ENCODE measurements at regions of chr12 and their contacts with region 1.

Region 1: DNA sequence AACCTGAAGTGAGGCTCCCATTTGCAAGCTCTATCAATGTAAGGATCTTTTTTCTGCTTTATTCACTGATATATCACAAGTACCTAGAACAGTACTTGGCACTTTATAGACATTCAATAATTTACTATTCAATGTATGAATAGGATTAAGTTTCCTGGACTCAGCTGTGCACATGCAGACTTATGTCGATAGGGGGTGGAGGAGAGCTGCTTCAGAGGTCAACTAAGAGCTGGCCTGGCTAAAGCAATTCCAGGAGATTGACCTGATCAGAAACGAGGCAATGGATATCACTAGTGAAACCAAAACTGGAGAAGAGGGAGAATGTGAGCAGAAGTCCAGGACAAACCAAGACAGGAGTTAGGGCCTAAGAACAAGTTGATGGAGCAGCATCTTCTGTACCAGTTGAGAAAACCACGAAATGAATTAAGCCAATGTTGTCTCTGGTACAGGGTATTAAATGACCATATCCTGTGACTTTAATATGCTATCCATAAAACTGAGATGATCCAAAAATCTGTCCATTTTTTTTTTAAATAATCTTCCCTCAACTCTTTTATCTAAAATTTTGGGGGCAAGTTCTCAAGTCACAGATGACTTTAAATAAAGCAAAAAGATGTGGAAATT is 169.2 kb downstream of the PIK3C2G start:
- DNase-seq: peak; percentile 71
- ATAC-seq: peak; percentile 99
- H3K4me3 ChIP-seq: no peak overlapping the region
- H3K27ac ChIP-seq: no peak overlapping the region
- H3K4me1 ChIP-seq: no peaks in the 10 kb centered on the region
- H3K27me3 ChIP-seq: no peaks in the 10 kb centered on the region
- CTCF ChIP-seq: peak; percentile 86
- POLR2A ChIP-seq: no peak
- RAD21 ChIP-seq: peak; percentile 89

Region 2: GRCh38 chr12:18250313-18250916 is 180.1 kb before region 1 on chr12:
- CTCF ChIA-PET with region 1: interaction called, 3 read pairs
- POLR2A ChIA-PET with region 1: no interaction called
- dilution Hi-C with region 1: no loop called
- in situ Hi-C with region 1: no loop called
- intact Hi-C with region 1: loop called (anchors 5 kb)
- DNase-seq: peak; percentile 76
- ATAC-seq: peak; percentile 48; the same call in 1 of the 2 replicates
- H3K4me3 ChIP-seq: no peak overlapping the region
- H3K27ac ChIP-seq: no peak overlapping the region
- H3K4me1 ChIP-seq: no peaks in the 10 kb centered on the region
- H3K27me3 ChIP-seq: no peaks in the 10 kb centered on the region
- CTCF ChIP-seq: peak; percentile 78
- POLR2A ChIP-seq: no peak
- RAD21 ChIP-seq: peak; percentile 78

Region 3: DNA sequence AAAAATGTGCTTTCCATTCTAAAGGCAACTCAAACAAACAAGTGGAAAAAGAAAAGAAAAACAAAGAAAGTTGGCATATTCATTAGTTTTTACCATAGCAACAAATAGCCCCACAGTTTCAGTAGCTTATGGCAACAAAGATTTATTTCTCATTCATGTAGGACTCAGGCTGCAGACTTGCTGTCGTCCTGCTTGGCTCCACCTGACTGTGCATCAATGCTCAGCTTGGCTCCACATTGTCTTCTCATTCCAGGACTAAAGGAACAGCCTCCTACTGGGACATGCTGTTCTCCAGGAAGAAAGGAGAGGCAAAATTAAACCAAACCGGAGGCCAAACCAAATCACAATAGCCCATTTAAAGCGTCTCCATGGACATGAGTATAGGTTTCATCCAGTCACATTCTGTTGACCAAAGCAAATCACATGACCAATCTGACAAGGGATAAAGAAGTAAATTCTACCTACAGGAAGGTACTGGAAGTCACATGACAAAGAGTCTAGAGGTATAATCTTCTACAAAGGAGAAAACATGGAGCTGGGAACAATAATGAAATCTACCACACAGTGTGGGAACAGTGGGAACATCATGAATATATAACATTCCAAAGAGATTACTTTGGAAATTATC is 53.3 kb after region 1 on chr12:
- CTCF ChIA-PET with region 1: no interaction called
- POLR2A ChIA-PET with region 1: no interaction called
- dilution Hi-C with region 1: no loop called
- in situ Hi-C with region 1: no loop called
- intact Hi-C with region 1: no loop called
- DNase-seq: no peak
- ATAC-seq: no peak
- H3K4me3 ChIP-seq: no peak overlapping the region
- H3K27ac ChIP-seq: no peak overlapping the region
- H3K4me1 ChIP-seq: no peaks in the 10 kb centered on the region
- H3K27me3 ChIP-seq: no peaks in the 10 kb centered on the region
- CTCF ChIP-seq: no peak
- POLR2A ChIP-seq: no peak
- RAD21 ChIP-seq: no peak

Region 4: DNA sequence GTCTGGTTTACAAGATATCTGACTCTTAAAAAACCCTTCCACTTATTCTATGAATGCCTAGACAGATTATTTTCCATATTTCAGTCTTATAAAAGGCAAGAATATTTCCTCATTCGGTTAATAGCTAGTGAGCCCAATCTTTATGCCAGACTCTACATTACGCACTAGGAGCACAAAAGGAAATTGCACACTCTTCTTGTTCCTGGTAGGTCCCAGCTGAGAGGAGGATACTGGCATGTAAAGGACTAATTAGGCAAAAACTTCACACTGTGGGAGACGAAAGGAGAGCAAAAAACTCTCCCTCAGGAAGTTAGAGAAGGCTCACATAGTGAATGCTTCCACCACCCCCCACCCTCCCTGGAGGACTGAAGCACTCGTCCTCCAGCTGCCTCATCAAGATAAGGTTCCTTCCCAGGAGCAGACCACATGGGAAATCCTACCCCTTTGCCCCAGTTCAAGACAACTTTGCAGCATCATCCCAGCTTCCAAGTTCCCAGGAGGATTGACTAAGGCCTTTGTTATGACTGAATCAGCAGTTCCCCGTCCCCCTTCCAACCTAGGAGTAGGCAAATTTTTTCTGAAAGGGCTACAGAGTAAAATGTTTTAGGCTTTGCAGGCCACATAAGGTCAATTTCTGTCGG is 321.9 kb after region 1 on chr12:
- CTCF ChIA-PET with region 1: no interaction called
- POLR2A ChIA-PET with region 1: no interaction called
- dilution Hi-C with region 1: no loop called
- in situ Hi-C with region 1: no loop called
- intact Hi-C with region 1: loop called (anchors 1 kb)
- DNase-seq: peak; percentile 95
- ATAC-seq: peak; percentile 34
- H3K4me3 ChIP-seq: no peak overlapping the region
- H3K27ac ChIP-seq: no peak overlapping the region
- H3K4me1 ChIP-seq: peaks cover 18% of the 10 kb centered on the region
- H3K27me3 ChIP-seq: no peaks in the 10 kb centered on the region
- CTCF ChIP-seq: no peak
- POLR2A ChIP-seq: no peak
- RAD21 ChIP-seq: no peak

Region 5: DNA sequence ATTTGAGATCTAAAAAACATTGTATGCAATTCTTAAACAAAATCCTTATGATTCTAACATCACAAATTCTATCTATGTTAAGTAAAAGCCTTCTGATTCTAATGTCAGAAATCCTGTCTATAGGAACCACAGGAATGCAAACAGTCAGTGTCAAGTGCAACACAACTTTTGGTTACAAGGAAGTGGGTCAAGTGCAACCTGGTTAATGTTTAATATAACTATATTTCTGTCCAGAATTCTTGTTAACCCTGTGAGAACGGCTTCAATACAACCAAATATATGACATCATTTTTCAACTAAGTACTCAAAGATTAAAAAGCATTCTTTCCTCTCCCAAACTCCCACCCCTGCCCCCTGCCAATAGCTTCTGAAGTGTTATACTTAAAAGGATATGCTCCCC is 591.1 kb after region 1 on chr12:
- CTCF ChIA-PET with region 1: no interaction called
- POLR2A ChIA-PET with region 1: no interaction called
- dilution Hi-C with region 1: no loop called
- in situ Hi-C with region 1: no loop called
- intact Hi-C with region 1: loop called (anchors 5 kb)
- DNase-seq: peak; percentile 58
- ATAC-seq: peak; percentile 27; the same call in 1 of the 2 replicates
- H3K4me3 ChIP-seq: no peak overlapping the region
- H3K27ac ChIP-seq: no peak overlapping the region
- H3K4me1 ChIP-seq: peaks cover 8% of the 10 kb centered on the region
- H3K27me3 ChIP-seq: no peaks in the 10 kb centered on the region
- CTCF ChIP-seq: no peak
- POLR2A ChIP-seq: no peak
- RAD21 ChIP-seq: no peak

Region 6: GRCh38 chr12:19186722-19187661 is 756.5 kb after region 1 on chr12:
- CTCF ChIA-PET with region 1: interaction called, 4 read pairs
- POLR2A ChIA-PET with region 1: no interaction called
- dilution Hi-C with region 1: no loop called
- in situ Hi-C with region 1: loop called (anchors 10 kb)
- intact Hi-C with region 1: loop called (anchors 1 kb)
- DNase-seq: peak; percentile 71
- ATAC-seq: peak; percentile 46; the same call in 1 of the 2 replicates
- H3K4me3 ChIP-seq: no peak overlapping the region
- H3K27ac ChIP-seq: no peak overlapping the region
- H3K4me1 ChIP-seq: peaks cover 10% of the 10 kb centered on the region
- H3K27me3 ChIP-seq: no peaks in the 10 kb centered on the region
- CTCF ChIP-seq: peak; percentile 68
- POLR2A ChIP-seq: no peak
- RAD21 ChIP-seq: peak; percentile 73

Measured in IMR-90 (cell line).